ENCODE measurements at regions of chr13 and their contacts with region 1.

Region 1: GRCh38 chr13:31742097-31742734 is 2.9 kb downstream of the RXFP2 start:
- DNase-seq: peak; percentile 66
- H3K4me3 ChIP-seq: peak overlapping the region in 1 of 2 experiments; percentile 20; a peak in 1 of 4 replicates
- H3K27ac ChIP-seq: no peak overlapping the region
- H3K4me1 ChIP-seq: no peaks in the 10 kb centered on the region; a peak in 1 of 4 replicates
- H3K27me3 ChIP-seq: no peaks in the 10 kb centered on the region
- CTCF ChIP-seq: peak; percentile 98
- EP300 ChIP-seq: no peak
- RAD21 ChIP-seq: peak; percentile 99

Region 2: GRCh38 chr13:31424117-31424729 is 318.0 kb before region 1 on chr13:
- CTCF ChIA-PET with region 1: interaction called, 66 read pairs
- POLR2A ChIA-PET with region 1: no interaction called
- DNase-seq: peak; percentile 73
- H3K4me3 ChIP-seq: no peak overlapping the region; a peak in 1 of 4 replicates
- H3K27ac ChIP-seq: no peak overlapping the region
- H3K4me1 ChIP-seq: no peaks in the 10 kb centered on the region; a peak in 1 of 4 replicates
- H3K27me3 ChIP-seq: no peaks in the 10 kb centered on the region; the same call in 1 of the 2 replicates
- CTCF ChIP-seq: peak; percentile 92
- EP300 ChIP-seq: no peak
- RAD21 ChIP-seq: peak; percentile 96

Region 3: DNA sequence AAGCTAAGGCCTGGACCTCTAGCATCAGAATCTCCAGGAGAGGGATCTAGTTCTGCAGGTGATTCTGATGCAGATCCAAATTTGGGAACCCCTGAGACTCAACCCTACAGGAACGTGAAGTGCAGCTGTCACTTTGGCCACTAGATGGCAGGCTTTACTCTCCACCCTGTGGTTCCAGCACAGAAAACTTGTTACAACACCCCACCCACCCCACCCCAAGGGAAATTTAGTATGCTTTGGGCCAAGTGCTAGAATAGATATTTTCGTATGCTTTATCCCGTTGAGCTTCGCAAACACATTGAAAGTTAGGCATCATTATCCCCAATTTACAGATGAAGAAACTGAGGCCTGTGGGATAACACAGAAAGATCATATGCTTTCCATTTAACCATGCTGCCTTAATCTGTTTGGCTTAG is 310.5 kb before region 1 on chr13:
- CTCF ChIA-PET with region 1: interaction called, 66 read pairs
- POLR2A ChIA-PET with region 1: no interaction called
- DNase-seq: peak; percentile 46
- H3K4me3 ChIP-seq: no peak overlapping the region
- H3K27ac ChIP-seq: no peak overlapping the region
- H3K4me1 ChIP-seq: peaks cover 0 to 6% of the 10 kb centered on the region in 2 experiments; a peak in 2 of 4 replicates
- H3K27me3 ChIP-seq: no peaks in the 10 kb centered on the region
- CTCF ChIP-seq: peak; percentile 71
- EP300 ChIP-seq: no peak
- RAD21 ChIP-seq: peak; percentile 75

Region 4: DNA sequence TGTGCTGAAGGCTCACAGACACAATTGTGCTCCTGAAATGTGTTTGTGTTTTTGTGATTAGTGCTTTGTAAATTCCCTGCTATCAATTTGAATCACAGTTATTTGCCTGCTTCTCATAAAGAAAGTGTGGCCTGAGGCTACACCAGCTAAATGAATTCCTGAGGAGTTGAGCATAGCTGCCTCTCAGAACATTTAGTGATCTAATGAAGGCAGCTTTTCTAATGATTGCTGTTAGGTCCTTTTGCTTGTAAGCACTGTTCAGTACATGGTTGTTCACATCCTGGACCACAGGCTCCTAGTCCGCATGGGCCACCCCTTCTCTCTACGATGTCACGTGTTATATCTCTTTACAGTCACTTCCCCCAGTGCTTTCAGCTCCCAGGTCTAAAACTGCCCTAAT is 304.2 kb before region 1 on chr13:
- CTCF ChIA-PET with region 1: interaction called, 17 read pairs
- POLR2A ChIA-PET with region 1: no interaction called
- DNase-seq: peak; percentile 6
- H3K4me3 ChIP-seq: no peak overlapping the region
- H3K27ac ChIP-seq: no peak overlapping the region; a peak in 1 of 4 replicates
- H3K4me1 ChIP-seq: peaks cover 0 to 8% of the 10 kb centered on the region in 2 experiments; a peak in 2 of 4 replicates
- H3K27me3 ChIP-seq: no peaks in the 10 kb centered on the region
- CTCF ChIP-seq: no peak
- EP300 ChIP-seq: no peak; a peak in 1 of 4 replicates
- RAD21 ChIP-seq: no peak

Region 5: DNA sequence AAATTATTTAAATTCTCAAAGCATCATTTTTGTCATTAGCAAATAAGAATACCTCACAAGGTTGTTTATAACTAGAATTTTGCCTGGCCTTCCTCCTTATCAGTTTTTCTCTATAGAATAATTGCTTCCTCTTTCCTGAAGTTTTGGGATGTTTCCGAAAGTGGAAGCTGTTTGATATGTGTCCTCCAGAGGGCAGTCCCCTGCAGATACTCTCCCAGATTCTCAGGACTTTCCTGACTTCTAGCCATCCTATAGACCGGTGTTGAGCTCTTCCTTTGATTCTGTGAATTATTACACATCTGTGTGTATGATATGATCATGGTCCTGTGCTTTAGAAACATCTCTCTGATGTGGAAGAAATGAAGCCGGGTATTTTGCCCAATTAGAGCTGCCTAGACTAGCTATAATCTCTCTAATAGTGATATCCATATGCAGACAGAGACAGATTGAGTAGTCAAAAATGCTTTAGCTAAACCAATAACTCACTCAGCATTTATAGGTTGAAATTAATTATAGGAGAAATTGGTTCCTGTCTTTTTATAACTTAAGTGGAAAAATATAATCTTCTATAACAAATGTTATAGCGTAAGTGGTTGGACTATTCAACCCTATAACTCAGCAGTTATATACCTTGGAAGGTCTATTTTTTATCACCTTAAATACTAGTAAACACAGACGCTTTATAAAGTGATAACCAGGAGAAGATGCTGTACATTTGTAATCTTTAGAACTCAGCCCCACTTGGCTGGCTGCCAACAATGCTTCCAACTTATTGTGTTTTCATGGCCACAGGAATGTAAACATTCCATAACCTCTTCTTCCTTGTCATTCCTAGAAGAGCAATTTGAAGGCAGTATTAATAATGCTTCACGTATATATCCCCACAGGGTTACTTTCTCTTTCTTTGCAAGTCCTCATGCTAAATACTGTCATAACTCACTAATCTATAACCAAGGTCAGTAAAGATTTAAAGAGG is 203.9 kb before region 1 on chr13:
- CTCF ChIA-PET with region 1: interaction called, 55 read pairs
- POLR2A ChIA-PET with region 1: no interaction called
- DNase-seq: peak; percentile 34
- H3K4me3 ChIP-seq: no peak overlapping the region; a peak in 1 of 4 replicates
- H3K27ac ChIP-seq: no peak overlapping the region
- H3K4me1 ChIP-seq: no peaks in the 10 kb centered on the region; a peak in 2 of 4 replicates
- H3K27me3 ChIP-seq: no peaks in the 10 kb centered on the region
- CTCF ChIP-seq: peak; percentile 68
- EP300 ChIP-seq: no peak
- RAD21 ChIP-seq: peak; percentile 75

Measured in SK-N-SH (cell line).